H1 (cell line): ENCODE measurements at regions of chr7 and their contacts with region 1.

Region 1: DNA sequence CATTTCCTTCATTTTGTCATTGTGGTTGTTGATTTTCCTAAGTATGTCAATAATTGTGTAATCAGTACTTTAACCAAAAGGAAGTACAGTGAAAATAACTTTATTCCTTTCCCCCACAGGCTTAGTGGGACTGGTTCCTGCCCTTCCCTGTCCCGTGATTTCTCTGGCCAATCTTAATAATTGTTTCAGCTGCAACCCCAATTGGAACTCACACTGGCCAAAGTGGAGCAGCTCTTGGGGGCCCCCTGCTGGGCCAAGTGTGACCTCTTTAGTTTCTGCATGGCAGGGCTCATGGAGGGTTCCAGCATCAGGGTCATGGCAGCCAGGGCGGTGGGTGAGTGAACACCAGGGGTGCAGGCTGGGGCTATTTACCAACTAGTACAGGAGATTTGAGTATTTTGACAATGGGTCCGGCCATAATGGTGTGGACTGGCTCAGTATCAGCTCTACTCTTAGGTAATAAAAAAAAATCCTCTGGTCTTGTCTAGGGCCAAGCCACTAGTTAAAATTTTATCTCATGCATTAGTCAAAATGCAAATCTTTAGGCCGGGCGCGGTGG is 31.7 kb downstream of the CYCS start:
- DNase-seq: peak in 1 of 2 experiments; percentile 92
- H3K4me3 ChIP-seq: no peak overlapping the region
- H3K27ac ChIP-seq: no peak overlapping the region
- H3K4me1 ChIP-seq: no peaks in the 10 kb centered on the region
- H3K27me3 ChIP-seq: no peaks in the 10 kb centered on the region
- CTCF ChIP-seq: peak; percentile 58 to 86 (median 75)
- EP300 ChIP-seq: no peak
- POLR2A ChIP-seq: no peak
- RAD21 ChIP-seq: peak; percentile 80 to 87

Region 2: DNA sequence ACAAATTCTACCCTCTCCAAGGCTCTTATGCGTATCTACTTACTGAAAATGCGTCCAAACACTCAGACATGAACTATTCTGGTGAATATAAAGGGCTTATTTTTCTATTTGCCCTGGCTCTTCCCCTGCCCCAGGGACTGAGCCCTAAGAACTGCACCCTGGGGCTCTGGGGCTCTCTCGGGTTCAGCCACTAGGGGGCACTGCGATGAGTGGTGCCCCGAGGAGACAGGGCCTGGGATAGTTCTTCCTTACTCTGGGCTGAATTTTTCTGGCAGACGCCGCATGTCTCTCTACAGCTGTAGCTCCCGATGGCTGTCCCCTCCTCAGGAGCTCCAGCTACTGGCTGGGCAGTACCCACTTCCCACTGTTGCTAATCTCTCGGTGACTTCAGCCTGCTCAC is 305.3 kb before region 1 on chr7:
- CTCF ChIA-PET with region 1: no interaction called
- POLR2A ChIA-PET with region 1: no interaction called
- DNase-seq: no peak
- H3K4me3 ChIP-seq: no peak overlapping the region
- H3K27ac ChIP-seq: no peak overlapping the region
- H3K4me1 ChIP-seq: no peaks in the 10 kb centered on the region
- H3K27me3 ChIP-seq: no peaks in the 10 kb centered on the region
- CTCF ChIP-seq: peak in 1 of 3 experiments; percentile 16; a peak in 1 of 4 replicates
- EP300 ChIP-seq: no peak
- POLR2A ChIP-seq: no peak
- RAD21 ChIP-seq: no peak

Region 3: GRCh38 chr7:24819916-24820689 is 273.2 kb before region 1 on chr7:
- CTCF ChIA-PET with region 1: interaction called, 80 read pairs
- POLR2A ChIA-PET with region 1: no interaction called
- DNase-seq: peak in 1 of 2 experiments; percentile 82
- H3K4me3 ChIP-seq: no peak overlapping the region
- H3K27ac ChIP-seq: no peak overlapping the region
- H3K4me1 ChIP-seq: no peaks in the 10 kb centered on the region
- H3K27me3 ChIP-seq: no peaks in the 10 kb centered on the region
- CTCF ChIP-seq: peak; percentile 50 to 94 (median 91)
- EP300 ChIP-seq: no peak
- POLR2A ChIP-seq: no peak
- RAD21 ChIP-seq: peak; percentile 92 to 95

Region 4: DNA sequence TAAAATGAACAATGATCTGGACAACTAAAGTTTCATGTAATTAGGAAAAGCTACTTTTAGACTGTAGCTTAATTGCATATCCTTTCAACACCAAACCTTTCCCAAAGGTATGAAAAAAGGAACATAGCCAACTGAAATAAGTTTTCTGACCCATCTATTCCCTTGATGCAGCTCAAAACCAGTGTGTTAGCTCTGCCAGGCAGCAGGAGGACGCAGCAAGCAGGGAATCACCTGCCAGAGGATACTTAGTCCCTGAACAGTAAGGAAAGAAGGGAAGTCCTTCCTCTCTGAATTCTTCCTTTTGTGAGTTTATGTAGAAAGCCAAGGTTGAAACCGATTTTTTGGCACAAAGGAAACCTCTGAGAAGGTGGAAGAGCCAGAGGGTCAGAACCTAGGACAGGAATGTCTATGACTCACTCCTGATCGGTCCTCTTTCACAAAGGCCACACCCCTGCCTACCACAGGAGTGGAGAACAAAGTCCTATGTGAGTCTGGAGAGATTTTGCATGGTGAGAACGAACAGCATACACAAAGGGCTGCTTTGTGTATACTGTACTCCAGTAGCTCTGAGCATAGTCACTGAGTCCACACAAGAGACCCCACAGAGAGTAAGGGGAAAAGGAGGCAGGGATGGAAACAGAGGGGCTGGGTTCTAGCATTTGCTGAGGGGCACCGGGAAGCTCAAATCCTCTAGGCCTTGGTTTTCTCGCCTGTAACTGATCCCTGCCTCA is 267.3 kb before region 1 on chr7:
- CTCF ChIA-PET with region 1: interaction called, 80 read pairs
- POLR2A ChIA-PET with region 1: no interaction called
- DNase-seq: no peak
- H3K4me3 ChIP-seq: no peak overlapping the region
- H3K27ac ChIP-seq: no peak overlapping the region
- H3K4me1 ChIP-seq: peaks cover 0 to 5% (median 0%) of the 10 kb centered on the region in 4 experiments; a peak in 1 of 7 replicates
- H3K27me3 ChIP-seq: no peaks in the 10 kb centered on the region
- CTCF ChIP-seq: no peak
- EP300 ChIP-seq: no peak
- POLR2A ChIP-seq: no peak
- RAD21 ChIP-seq: no peak

Region 5: DNA sequence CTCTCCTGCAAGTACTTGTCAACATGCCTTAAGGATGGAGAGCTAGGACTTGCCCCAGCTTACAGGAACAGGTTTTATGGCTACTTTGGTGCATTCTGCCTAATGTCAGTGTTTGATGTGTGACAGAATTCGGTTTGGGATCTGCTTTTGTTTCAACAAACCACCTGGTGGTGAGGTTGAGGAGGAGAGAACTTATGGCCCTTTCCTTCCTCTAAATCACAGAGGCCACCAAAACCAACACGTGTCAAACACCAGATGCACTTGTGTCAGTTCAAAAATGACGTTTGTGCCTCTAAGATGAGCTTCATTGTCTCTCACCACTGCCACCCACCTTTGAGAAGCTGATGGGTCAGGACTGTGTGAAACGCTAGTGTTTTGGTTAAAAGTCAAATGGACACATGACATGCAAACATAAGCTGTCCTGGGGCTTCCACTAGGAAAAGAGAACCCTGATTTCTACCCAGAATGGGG is 197.3 kb before region 1 on chr7:
- CTCF ChIA-PET with region 1: interaction called, 47 read pairs
- POLR2A ChIA-PET with region 1: no interaction called
- DNase-seq: no peak
- H3K4me3 ChIP-seq: no peak overlapping the region
- H3K27ac ChIP-seq: no peak overlapping the region
- H3K4me1 ChIP-seq: peaks cover 0 to 10% (median 1%) of the 10 kb centered on the region in 4 experiments; a peak in 2 of 7 replicates
- H3K27me3 ChIP-seq: no peaks in the 10 kb centered on the region
- CTCF ChIP-seq: no peak
- EP300 ChIP-seq: no peak
- POLR2A ChIP-seq: no peak
- RAD21 ChIP-seq: no peak

Region 6: GRCh38 chr7:25069900-25070443 is 23.4 kb before region 1 on chr7:
- CTCF ChIA-PET with region 1: interaction called, 10 read pairs
- POLR2A ChIA-PET with region 1: no interaction called
- DNase-seq: peak in 1 of 2 experiments; percentile 53
- H3K4me3 ChIP-seq: no peak overlapping the region
- H3K27ac ChIP-seq: no peak overlapping the region
- H3K4me1 ChIP-seq: no peaks in the 10 kb centered on the region; a peak in 2 of 7 replicates
- H3K27me3 ChIP-seq: no peaks in the 10 kb centered on the region
- CTCF ChIP-seq: peak in 2 of 3 experiments; percentile 76 to 77; a peak in 3 of 4 replicates
- EP300 ChIP-seq: no peak
- POLR2A ChIP-seq: no peak
- RAD21 ChIP-seq: peak; percentile 81 to 84

Region 7: GRCh38 chr7:25117226-25118047 is 24.1 kb after region 1 on chr7:
- CTCF ChIA-PET with region 1: interaction called, 11 read pairs
- POLR2A ChIA-PET with region 1: interaction called, 3 read pairs
- DNase-seq: no peak
- H3K4me3 ChIP-seq: no peak overlapping the region
- H3K27ac ChIP-seq: no peak overlapping the region
- H3K4me1 ChIP-seq: no peaks in the 10 kb centered on the region
- H3K27me3 ChIP-seq: no peaks in the 10 kb centered on the region
- CTCF ChIP-seq: no peak
- EP300 ChIP-seq: no peak
- POLR2A ChIP-seq: peak in 1 of 2 experiments; percentile 57; a peak in 2 of 3 replicates
- RAD21 ChIP-seq: no peak

Region 8: DNA sequence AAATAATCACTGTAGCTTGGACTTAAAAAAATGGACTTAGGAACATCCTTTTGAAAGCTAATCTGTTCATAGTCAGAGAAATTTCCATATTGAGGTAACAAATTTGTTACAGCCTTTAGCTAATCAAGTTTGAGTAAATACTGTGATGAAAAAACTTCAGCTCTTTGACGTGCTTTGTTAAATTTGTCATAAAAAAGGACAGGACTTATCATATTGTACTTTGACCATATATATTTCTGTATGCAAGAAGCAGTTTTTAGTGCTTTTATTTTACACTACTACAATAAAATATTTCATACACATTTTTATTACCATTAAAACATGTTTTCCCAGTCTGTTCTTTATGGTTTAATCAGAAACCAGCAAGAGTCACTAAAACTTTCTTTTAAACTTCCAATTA is 46.2 kb after region 1 on chr7:
- CTCF ChIA-PET with region 1: no interaction called
- POLR2A ChIA-PET with region 1: no interaction called
- DNase-seq: no peak
- H3K4me3 ChIP-seq: no peak overlapping the region
- H3K27ac ChIP-seq: no peak overlapping the region
- H3K4me1 ChIP-seq: peaks cover 0 to 2% (median 0%) of the 10 kb centered on the region in 4 experiments; a peak in 1 of 7 replicates
- H3K27me3 ChIP-seq: no peaks in the 10 kb centered on the region
- CTCF ChIP-seq: no peak
- EP300 ChIP-seq: no peak
- POLR2A ChIP-seq: no peak
- RAD21 ChIP-seq: no peak

Region 9: DNA sequence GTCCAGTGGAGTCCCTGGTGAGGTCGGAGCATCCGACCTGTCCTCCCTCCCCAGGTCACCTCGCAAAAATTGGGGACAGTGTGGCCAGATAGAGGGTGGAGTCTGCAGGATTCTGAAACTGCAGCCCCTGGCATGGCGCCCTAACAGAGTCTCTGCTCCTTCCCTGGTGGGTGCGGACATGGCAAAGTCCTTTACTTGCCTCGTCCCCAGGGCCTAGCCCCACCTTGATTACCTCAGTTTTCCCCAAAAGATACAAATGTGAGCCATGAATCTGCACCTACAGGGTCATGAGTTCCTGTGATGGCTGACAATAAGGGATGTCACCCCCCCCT is 87.2 kb after region 1 on chr7:
- CTCF ChIA-PET with region 1: no interaction called
- POLR2A ChIA-PET with region 1: no interaction called
- DNase-seq: no peak
- H3K4me3 ChIP-seq: peak overlapping the region in 2 of 4 experiments; percentile 15 to 80; a peak in 3 of 8 replicates
- H3K27ac ChIP-seq: no peak overlapping the region
- H3K4me1 ChIP-seq: peaks cover 0 to 6% (median 5%) of the 10 kb centered on the region in 4 experiments; a peak in 5 of 7 replicates
- H3K27me3 ChIP-seq: peaks cover 0 to 4% (median 3%) of the 10 kb centered on the region in 4 experiments; a peak in 5 of 7 replicates
- CTCF ChIP-seq: no peak
- EP300 ChIP-seq: no peak
- POLR2A ChIP-seq: no peak
- RAD21 ChIP-seq: no peak